ENCODE measurements at regions of chr1 and their contacts with region 1.

Region 1: GRCh38 chr1:229227298-229227919 is 43.5 kb upstream of the RAB4A start:
- DNase-seq: peak; percentile 62 to 73
- ATAC-seq: peak; percentile 21 to 29
- H3K4me3 ChIP-seq: no peak overlapping the region
- H3K27ac ChIP-seq: peak overlapping the region in 1 of 4 donors; percentile 97
- H3K4me1 ChIP-seq: peaks cover 31 to 53% of the 10 kb centered on the region in 2 donors
- H3K27me3 ChIP-seq: no peaks in the 10 kb centered on the region
- CTCF ChIP-seq: peak; percentile 65 to 89 (median 86)
- POLR2A ChIP-seq: no peak

Region 2: GRCh38 chr1:228664399-228664914 is 563.0 kb before region 1 on chr1:
- in situ Hi-C with region 1: no loop called
- intact Hi-C with region 1: loop called (anchors 1 kb)
- DNase-seq: peak; percentile 39 to 51
- ATAC-seq: peak in 1 of 2 donors; percentile 55
- H3K4me3 ChIP-seq: no peak overlapping the region
- H3K27ac ChIP-seq: no peak overlapping the region
- H3K4me1 ChIP-seq: no peaks in the 10 kb centered on the region
- H3K27me3 ChIP-seq: peaks cover 0 to 3% (median 0%) of the 10 kb centered on the region in 3 donors
- CTCF ChIP-seq: peak; percentile 72 to 90 (median 80)
- POLR2A ChIP-seq: no peak

Region 3: DNA sequence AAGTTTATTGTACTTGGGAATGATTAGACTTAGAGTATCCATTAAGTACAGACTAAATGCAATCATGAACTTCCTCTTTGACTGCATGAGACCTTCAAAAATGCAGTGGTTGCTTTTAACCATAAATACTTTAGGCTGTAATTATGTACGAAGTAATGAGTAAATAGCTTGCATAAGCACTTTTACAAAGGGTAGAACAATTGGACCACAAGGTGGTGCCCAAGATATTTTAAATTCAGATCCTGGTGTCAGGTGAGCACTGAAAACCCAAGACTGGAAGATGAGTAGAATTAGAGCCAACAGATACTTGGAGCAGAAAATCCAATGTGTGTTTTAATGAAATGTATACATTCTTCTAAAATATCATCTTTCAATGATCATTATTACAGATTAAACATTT is 535.5 kb before region 1 on chr1:
- in situ Hi-C with region 1: no loop called
- intact Hi-C with region 1: loop called (anchors 1 kb)
- DNase-seq: no peak
- ATAC-seq: peak; percentile 58 to 65
- H3K4me3 ChIP-seq: no peak overlapping the region
- H3K27ac ChIP-seq: no peak overlapping the region
- H3K4me1 ChIP-seq: no peaks in the 10 kb centered on the region
- H3K27me3 ChIP-seq: peaks cover 0 to 2% (median 0%) of the 10 kb centered on the region in 3 donors
- CTCF ChIP-seq: peak; percentile 30 to 53 (median 43)
- POLR2A ChIP-seq: no peak

Region 4: DNA sequence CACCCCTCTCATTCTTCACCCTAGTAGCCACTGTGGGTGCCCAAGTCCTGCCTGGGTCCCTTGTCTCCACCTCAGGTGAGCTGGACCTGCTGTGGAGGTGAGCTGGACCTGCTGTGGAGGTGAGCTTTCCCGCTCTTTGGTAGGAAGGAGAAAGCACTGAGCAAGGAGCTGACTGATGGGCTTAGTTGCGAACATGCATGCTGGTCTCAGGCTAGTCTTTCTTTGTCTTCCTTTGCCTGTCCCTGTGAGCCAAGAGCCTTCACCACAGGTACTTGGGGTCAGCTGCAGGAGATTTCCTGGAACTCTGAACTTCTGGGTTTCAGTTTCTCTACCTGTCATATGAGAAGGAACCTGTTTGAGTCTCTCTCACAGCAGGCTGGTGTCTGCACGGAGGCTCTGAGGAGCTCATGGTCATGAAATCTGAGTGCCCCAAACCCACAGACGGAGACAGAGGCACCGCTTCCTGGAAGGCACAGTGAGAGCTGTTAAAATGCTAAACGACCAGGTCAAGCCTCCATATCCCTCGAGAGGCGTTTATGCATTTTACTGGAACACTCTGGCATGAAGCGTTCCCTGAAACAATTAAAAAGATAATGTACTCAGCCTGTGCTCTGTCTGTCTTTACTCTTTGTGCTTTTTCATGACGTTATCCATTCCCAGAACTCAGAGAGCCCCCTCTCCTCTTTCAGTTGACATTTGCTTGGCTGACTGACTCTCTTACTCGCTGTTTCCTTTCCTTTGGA is 422.6 kb before region 1 on chr1:
- in situ Hi-C with region 1: no loop called
- intact Hi-C with region 1: no loop called
- DNase-seq: no peak
- ATAC-seq: peak in 1 of 2 donors; percentile 28
- H3K4me3 ChIP-seq: no peak overlapping the region
- H3K27ac ChIP-seq: no peak overlapping the region
- H3K4me1 ChIP-seq: peaks cover 6 to 31% of the 10 kb centered on the region in 2 donors
- H3K27me3 ChIP-seq: no peaks in the 10 kb centered on the region
- CTCF ChIP-seq: no peak
- POLR2A ChIP-seq: no peak

Region 5: GRCh38 chr1:229003233-229004031 is 224.0 kb before region 1 on chr1:
- in situ Hi-C with region 1: no loop called
- intact Hi-C with region 1: no loop called
- DNase-seq: no peak
- ATAC-seq: no peak
- H3K4me3 ChIP-seq: no peak overlapping the region
- H3K27ac ChIP-seq: no peak overlapping the region
- H3K4me1 ChIP-seq: no peaks in the 10 kb centered on the region
- H3K27me3 ChIP-seq: no peaks in the 10 kb centered on the region
- CTCF ChIP-seq: no peak
- POLR2A ChIP-seq: no peak